ENCODE measurements at regions of chr6 and their contacts with region 1.

Region 1: DNA sequence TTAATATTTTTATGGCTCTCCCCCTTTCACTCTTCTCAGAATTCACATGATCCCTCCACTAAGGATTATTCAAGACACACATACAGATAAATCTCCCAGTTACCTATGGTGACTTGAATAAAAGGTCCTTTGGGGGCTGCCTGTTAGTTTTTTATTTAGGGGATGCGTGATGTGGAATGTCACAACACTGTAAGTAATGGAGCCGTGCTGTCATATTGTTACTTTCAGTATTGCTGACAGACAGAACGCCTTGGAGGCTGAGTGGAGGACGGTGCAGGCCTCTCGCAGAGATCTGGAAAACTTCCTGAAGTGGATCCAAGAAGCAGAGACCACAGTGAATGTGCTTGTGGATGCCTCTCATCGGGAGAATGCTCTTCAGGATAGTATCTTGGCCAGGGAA is 291.7 kb downstream of the UTRN start:
- DNase-seq: no peak
- ATAC-seq: no peak
- H3K4me3 ChIP-seq: no peak overlapping the region
- H3K27ac ChIP-seq: no peak overlapping the region
- H3K4me1 ChIP-seq: no peaks in the 10 kb centered on the region
- H3K27me3 ChIP-seq: no peaks in the 10 kb centered on the region
- CTCF ChIP-seq: no peak
- EP300 ChIP-seq: no peak
- POLR2A ChIP-seq: no peak
- RAD21 ChIP-seq: no peak

Region 2: GRCh38 chr6:144384427-144384826 is 192.4 kb before region 1 on chr6:
- CTCF ChIA-PET with region 1: no interaction called
- POLR2A ChIA-PET with region 1: no interaction called
- RAD21 ChIA-PET with region 1: no interaction called
- SMC1A ChIA-PET with region 1: no interaction called
- in situ Hi-C with region 1: no loop called
- intact Hi-C with region 1: no loop called
- DNase-seq: no peak
- ATAC-seq: no peak
- H3K4me3 ChIP-seq: no peak overlapping the region
- H3K27ac ChIP-seq: no peak overlapping the region
- H3K4me1 ChIP-seq: no peaks in the 10 kb centered on the region
- H3K27me3 ChIP-seq: no peaks in the 10 kb centered on the region
- CTCF ChIP-seq: no peak
- EP300 ChIP-seq: no peak
- POLR2A ChIP-seq: no peak
- RAD21 ChIP-seq: no peak

Region 3: GRCh38 chr6:144482142-144482541 is 94.7 kb before region 1 on chr6:
- CTCF ChIA-PET with region 1: no interaction called
- POLR2A ChIA-PET with region 1: no interaction called
- RAD21 ChIA-PET with region 1: no interaction called
- SMC1A ChIA-PET with region 1: no interaction called
- in situ Hi-C with region 1: no loop called
- intact Hi-C with region 1: no loop called
- DNase-seq: peak; percentile 20
- ATAC-seq: peak; percentile 92
- H3K4me3 ChIP-seq: no peak overlapping the region
- H3K27ac ChIP-seq: no peak overlapping the region
- H3K4me1 ChIP-seq: no peaks in the 10 kb centered on the region
- H3K27me3 ChIP-seq: no peaks in the 10 kb centered on the region
- CTCF ChIP-seq: peak; percentile 63 to 79 (median 73); a peak in 5 of 6 replicates
- EP300 ChIP-seq: no peak
- POLR2A ChIP-seq: no peak
- RAD21 ChIP-seq: peak; percentile 73

Region 4: GRCh38 chr6:144510859-144511258 is 66.0 kb before region 1 on chr6:
- CTCF ChIA-PET with region 1: no interaction called
- POLR2A ChIA-PET with region 1: no interaction called
- RAD21 ChIA-PET with region 1: no interaction called
- SMC1A ChIA-PET with region 1: no interaction called
- in situ Hi-C with region 1: no loop called
- intact Hi-C with region 1: no loop called
- DNase-seq: no peak
- ATAC-seq: no peak
- H3K4me3 ChIP-seq: no peak overlapping the region
- H3K27ac ChIP-seq: no peak overlapping the region
- H3K4me1 ChIP-seq: no peaks in the 10 kb centered on the region
- H3K27me3 ChIP-seq: no peaks in the 10 kb centered on the region
- CTCF ChIP-seq: no peak
- EP300 ChIP-seq: no peak
- POLR2A ChIP-seq: no peak
- RAD21 ChIP-seq: no peak

Region 5: GRCh38 chr6:144548536-144548935 is 28.3 kb before region 1 on chr6:
- CTCF ChIA-PET with region 1: no interaction called
- POLR2A ChIA-PET with region 1: no interaction called
- RAD21 ChIA-PET with region 1: no interaction called
- SMC1A ChIA-PET with region 1: no interaction called
- in situ Hi-C with region 1: no loop called
- intact Hi-C with region 1: no loop called
- DNase-seq: no peak
- ATAC-seq: no peak
- H3K4me3 ChIP-seq: no peak overlapping the region
- H3K27ac ChIP-seq: no peak overlapping the region
- H3K4me1 ChIP-seq: no peaks in the 10 kb centered on the region
- H3K27me3 ChIP-seq: no peaks in the 10 kb centered on the region
- CTCF ChIP-seq: no peak
- EP300 ChIP-seq: no peak
- POLR2A ChIP-seq: no peak
- RAD21 ChIP-seq: no peak

Region 6: DNA sequence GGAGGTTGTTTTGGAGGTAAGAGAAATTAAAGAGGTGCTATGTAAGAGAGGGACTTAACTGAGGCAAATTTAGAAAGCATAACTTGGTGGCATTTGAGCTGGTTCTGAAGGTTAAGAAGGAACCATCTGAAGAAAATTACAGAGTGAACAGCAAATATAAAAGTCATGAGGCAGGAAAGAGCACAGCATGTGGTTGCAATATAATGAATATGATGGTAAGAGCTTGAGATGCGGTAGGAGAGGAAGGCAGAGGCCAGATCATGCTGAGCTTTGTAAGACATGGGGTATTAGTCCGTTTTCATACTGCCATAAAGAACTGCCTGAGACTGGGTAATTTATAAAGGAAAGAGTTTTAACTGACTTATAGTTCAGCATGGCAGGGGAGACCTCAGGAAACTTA is 12.7 kb before region 1 on chr6:
- CTCF ChIA-PET with region 1: interaction called, 8 read pairs
- POLR2A ChIA-PET with region 1: no interaction called
- RAD21 ChIA-PET with region 1: no interaction called
- SMC1A ChIA-PET with region 1: interaction called, 10 read pairs
- in situ Hi-C with region 1: no loop called
- intact Hi-C with region 1: no loop called
- DNase-seq: no peak
- ATAC-seq: no peak
- H3K4me3 ChIP-seq: no peak overlapping the region
- H3K27ac ChIP-seq: no peak overlapping the region
- H3K4me1 ChIP-seq: no peaks in the 10 kb centered on the region
- H3K27me3 ChIP-seq: no peaks in the 10 kb centered on the region
- CTCF ChIP-seq: no peak
- EP300 ChIP-seq: no peak
- POLR2A ChIP-seq: no peak
- RAD21 ChIP-seq: no peak